CD8-positive, alpha-beta T cell (primary cell): ENCODE measurements at regions of chr11 and their contacts with region 1.

Region 1: GRCh38 chr11:93668171-93668570 is 6.7 kb downstream of the CEP295 start:
- DNase-seq: no peak
- ATAC-seq: no peak
- H3K4me3 ChIP-seq: no peak overlapping the region
- H3K4me3 Mint-ChIP-seq: no peak overlapping the region
- H3K27ac ChIP-seq: no peak overlapping the region
- H3K27ac Mint-ChIP-seq: peak overlapping the region; percentile 11
- H3K4me1 ChIP-seq: no peaks in the 10 kb centered on the region
- H3K4me1 Mint-ChIP-seq: peaks cover 17% of the 10 kb centered on the region
- H3K27me3 ChIP-seq: no peaks in the 10 kb centered on the region
- H3K27me3 Mint-ChIP-seq: no peaks in the 10 kb centered on the region
- CTCF ChIP-seq: no peak

Region 2: DNA sequence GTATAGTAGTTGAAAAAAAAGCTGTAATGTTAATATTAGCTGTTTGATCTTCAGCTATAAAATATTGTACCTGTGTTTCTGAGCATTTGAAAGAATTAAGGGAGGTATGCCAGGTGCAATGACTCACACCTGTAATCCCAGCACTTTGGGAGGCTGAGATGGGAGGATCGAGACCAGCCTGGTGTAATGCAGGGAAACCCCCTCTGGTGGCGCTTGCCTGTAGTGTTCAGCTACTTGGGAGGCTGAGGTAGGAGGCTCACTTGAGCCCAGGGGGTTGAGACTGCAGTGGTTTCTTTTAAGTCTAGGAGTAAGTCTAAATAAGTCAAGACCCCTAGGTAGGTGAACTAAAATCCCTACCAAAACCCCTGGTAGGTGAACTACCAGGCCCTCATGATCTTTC is 36.1 kb after region 1 on chr11:
- CTCF ChIA-PET with region 1: interaction called, 4 read pairs
- POLR2A ChIA-PET with region 1: no interaction called
- intact Hi-C with region 1: loop called in 1 of 2 experiments (anchors 5 kb)
- DNase-seq: no peak
- ATAC-seq: no peak
- H3K4me3 ChIP-seq: no peak overlapping the region
- H3K4me3 Mint-ChIP-seq: no peak overlapping the region
- H3K27ac ChIP-seq: no peak overlapping the region
- H3K27ac Mint-ChIP-seq: no peak overlapping the region
- H3K4me1 ChIP-seq: no peaks in the 10 kb centered on the region
- H3K4me1 Mint-ChIP-seq: no peaks in the 10 kb centered on the region
- H3K27me3 ChIP-seq: no peaks in the 10 kb centered on the region
- H3K27me3 Mint-ChIP-seq: no peaks in the 10 kb centered on the region
- CTCF ChIP-seq: no peak

Region 3: GRCh38 chr11:94486068-94486467 is 817.9 kb after region 1 on chr11:
- CTCF ChIA-PET with region 1: no interaction called
- POLR2A ChIA-PET with region 1: no interaction called
- intact Hi-C with region 1: loop called (anchors 5 kb)
- DNase-seq: no peak
- ATAC-seq: no peak
- H3K4me3 ChIP-seq: no peak overlapping the region
- H3K4me3 Mint-ChIP-seq: no peak overlapping the region
- H3K27ac ChIP-seq: no peak overlapping the region
- H3K27ac Mint-ChIP-seq: no peak overlapping the region
- H3K4me1 ChIP-seq: no peaks in the 10 kb centered on the region
- H3K4me1 Mint-ChIP-seq: peaks cover 15% of the 10 kb centered on the region
- H3K27me3 ChIP-seq: no peaks in the 10 kb centered on the region
- H3K27me3 Mint-ChIP-seq: no peaks in the 10 kb centered on the region
- CTCF ChIP-seq: no peak